ENCODE measurements at regions of chr5 and their contacts with region 1.

Region 1: DNA sequence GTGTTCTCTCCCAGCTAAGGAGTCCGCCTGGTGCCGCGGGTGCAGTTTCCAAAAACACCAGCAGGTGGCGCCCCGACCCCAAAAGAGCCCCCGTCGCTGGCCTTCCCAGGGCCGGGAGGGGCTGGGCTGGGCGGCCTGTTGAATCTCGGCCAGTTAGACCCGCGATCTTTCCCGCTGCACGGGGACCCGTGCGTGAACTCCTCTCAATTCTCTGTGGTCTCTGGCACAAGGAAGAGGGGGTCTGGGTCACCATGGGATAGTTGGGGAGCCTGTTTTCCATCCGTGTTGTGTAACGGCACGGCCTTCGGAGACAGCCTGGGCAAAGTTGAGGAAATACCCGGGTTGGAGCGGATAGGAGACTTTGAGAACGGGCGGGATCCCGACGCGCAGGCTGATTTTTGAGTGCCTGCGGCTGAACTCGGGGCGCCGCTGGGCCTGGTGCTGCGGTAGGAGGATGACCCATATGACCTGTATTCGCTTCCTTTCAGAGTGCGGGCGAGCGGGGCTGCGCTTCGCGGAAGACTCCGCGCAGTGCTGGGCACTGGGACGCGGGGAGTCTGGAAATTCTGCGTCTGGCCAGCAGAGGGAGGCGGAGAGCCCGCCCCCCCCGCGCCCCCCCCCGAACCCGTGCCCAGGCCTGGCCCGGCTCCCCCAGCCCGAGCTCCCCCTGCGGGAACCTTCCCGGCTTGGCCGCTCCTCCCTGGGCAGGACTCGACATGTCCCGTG is 7.9 kb upstream of the PSD2 start:
- DNase-seq: peak; percentile 93
- ATAC-seq: peak; percentile 94

Region 2: GRCh38 chr5:139863855-139864558 is 76.3 kb after region 1 on chr5:
- intact Hi-C with region 1: loop called (anchors 5 kb)
- DNase-seq: peak; percentile 61
- ATAC-seq: peak; percentile 87

Region 3: DNA sequence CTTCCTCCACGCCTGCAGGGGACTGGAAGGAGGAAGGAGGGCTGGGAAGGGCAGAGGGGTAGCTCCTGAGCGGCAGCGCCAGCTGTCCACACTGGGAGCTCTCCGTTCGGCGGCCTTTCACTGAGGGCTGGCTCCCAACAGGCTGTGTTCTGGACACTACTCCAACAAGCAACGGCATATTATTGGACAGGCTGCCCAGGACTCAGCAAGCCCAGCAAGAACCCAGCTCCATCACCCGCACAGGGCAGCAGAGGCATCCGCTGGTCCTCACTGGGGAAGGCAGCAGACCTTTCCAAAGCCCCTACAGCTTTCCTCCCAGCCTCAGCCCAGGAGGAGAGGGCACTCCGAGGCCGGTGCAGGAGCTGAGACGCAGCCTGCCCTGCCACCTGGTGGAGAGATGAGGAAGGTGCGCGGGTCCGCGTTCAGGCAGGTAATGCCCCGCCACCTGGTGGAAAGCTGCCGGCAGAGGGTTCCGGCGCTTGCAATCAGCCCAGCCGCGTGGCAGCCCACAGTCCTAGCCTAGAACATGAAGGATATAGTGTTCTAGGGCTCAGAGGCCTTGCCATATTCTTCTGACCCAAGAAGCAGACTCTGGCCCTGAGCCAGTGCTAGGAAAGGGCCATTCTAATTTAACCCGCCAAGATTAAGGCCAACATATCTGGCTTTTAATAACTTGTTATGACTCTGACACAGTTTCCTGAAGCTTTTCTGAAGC is 181.0 kb after region 1 on chr5:
- intact Hi-C with region 1: loop called (anchors 2 kb)
- DNase-seq: peak; percentile 91
- ATAC-seq: peak; percentile 98

Region 4: DNA sequence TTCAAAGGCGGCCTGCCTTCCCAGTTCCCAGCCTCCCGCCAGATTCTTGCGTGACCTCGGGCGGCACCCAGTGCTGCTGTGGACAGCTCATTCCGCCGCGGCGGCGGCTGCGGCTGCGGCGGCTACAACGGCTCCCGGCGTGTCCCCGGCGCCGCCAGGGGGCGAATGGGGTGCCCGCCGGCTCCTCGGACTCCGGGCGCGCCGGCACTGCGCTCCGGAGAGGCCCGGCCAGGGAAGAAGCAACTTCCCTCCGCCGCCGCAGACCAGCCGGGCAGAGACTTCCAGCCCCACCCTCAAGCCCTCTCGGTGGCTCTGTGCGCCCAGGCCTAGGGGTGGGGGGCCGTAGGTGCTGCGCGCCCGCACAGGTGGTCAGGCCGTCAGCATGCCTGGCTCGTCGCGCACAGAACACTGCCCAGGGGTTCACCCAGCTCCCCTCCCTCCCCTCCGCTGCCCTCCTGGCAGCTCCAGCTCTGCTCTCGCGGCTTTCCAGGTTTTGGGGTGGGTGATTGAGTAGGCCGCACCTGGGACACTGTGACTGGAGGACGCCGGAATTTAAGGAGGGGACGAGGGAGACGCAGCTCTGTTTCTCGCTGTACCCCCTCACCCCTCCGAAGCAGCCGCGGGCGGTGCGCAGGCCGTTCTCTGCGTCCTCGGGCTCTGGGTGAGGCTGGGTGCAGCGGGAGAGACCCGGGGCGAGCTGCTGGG is 358.2 kb after region 1 on chr5:
- intact Hi-C with region 1: loop called (anchors 10 kb)
- DNase-seq: peak; percentile 87
- ATAC-seq: peak; percentile 98